ENCODE measurements at regions of chr20 and their contacts with region 1.

Region 1: GRCh38 chr20:62409931-62410745 is 3.1 kb upstream of the CABLES2 start:
- DNase-seq: peak; percentile 73
- H3K4me3 ChIP-seq: peak overlapping the region in 1 of 4 donors; percentile 5
- H3K27ac ChIP-seq: peak overlapping the region; percentile 71 to 92 (median 83)
- H3K4me1 ChIP-seq: peaks cover 39 to 81% (median 74%) of the 10 kb centered on the region in 4 donors
- H3K27me3 ChIP-seq: no peaks in the 10 kb centered on the region
- CTCF ChIP-seq: peak; percentile 23 to 55 (median 42)
- EP300 ChIP-seq: no peak
- POLR2A ChIP-seq: peak; percentile 11

Region 2: DNA sequence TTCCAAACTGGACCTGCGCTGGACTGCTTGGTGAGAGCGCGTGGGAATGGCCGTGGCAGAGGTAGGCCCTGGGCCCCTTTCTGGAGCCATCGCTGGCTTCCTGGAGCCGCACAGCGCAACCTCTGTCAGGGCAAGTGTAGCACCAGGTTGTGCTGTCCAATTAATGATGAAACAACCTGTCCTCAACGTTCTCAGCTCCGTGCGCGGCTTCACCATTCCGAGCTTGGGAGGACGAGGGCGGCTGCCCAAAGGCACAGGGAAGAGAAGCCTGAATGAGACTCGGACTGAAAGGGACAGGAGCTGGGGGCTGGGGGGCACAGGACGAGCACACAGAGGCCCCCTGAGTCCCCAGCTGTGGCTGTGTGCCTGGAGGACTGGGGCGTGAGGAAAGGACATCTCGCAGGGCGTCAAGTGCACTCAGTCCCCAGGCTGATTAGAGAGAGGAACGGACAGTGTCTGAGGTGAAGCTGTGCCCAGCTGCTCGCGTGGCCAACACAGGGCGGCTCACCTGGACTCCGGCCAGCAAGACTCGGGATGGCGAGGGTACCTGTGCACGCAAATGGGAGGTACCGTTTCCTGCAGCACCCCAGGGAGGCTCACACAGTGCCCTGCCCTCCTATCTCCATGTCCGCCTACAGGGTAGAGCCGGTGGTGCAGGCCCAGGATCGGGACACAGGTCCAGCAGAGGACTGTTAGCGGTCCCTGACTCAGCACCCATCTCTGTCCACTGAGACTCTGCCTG is 747.7 kb before region 1 on chr20:
- in situ Hi-C with region 1: no loop called
- intact Hi-C with region 1: loop called (anchors 10 kb)
- DNase-seq: no peak
- H3K4me3 ChIP-seq: no peak overlapping the region
- H3K27ac ChIP-seq: no peak overlapping the region
- H3K4me1 ChIP-seq: no peaks in the 10 kb centered on the region
- H3K27me3 ChIP-seq: no peaks in the 10 kb centered on the region
- CTCF ChIP-seq: no peak
- EP300 ChIP-seq: no peak
- POLR2A ChIP-seq: no peak

Region 3: GRCh38 chr20:62161347-62162071 is 248.6 kb before region 1 on chr20:
- in situ Hi-C with region 1: no loop called
- intact Hi-C with region 1: no loop called
- DNase-seq: no peak
- H3K4me3 ChIP-seq: no peak overlapping the region
- H3K27ac ChIP-seq: no peak overlapping the region
- H3K4me1 ChIP-seq: peaks cover 0 to 7% (median 1%) of the 10 kb centered on the region in 4 donors
- H3K27me3 ChIP-seq: no peaks in the 10 kb centered on the region
- CTCF ChIP-seq: no peak
- EP300 ChIP-seq: no peak
- POLR2A ChIP-seq: no peak

Region 4: GRCh38 chr20:62191781-62192559 is 218.2 kb before region 1 on chr20:
- in situ Hi-C with region 1: no loop called
- intact Hi-C with region 1: no loop called
- DNase-seq: no peak
- H3K4me3 ChIP-seq: no peak overlapping the region
- H3K27ac ChIP-seq: no peak overlapping the region
- H3K4me1 ChIP-seq: peaks cover 0 to 7% (median 3%) of the 10 kb centered on the region in 4 donors
- H3K27me3 ChIP-seq: no peaks in the 10 kb centered on the region
- CTCF ChIP-seq: no peak
- EP300 ChIP-seq: no peak
- POLR2A ChIP-seq: no peak

Region 5: GRCh38 chr20:62368976-62369814 is 40.9 kb before region 1 on chr20:
- in situ Hi-C with region 1: no loop called
- intact Hi-C with region 1: no loop called
- DNase-seq: no peak
- H3K4me3 ChIP-seq: peak overlapping the region in 2 of 4 donors; percentile 58 to 82
- H3K27ac ChIP-seq: peak overlapping the region; percentile 86 to 97 (median 88)
- H3K4me1 ChIP-seq: peaks cover 44 to 73% (median 55%) of the 10 kb centered on the region in 4 donors
- H3K27me3 ChIP-seq: peaks cover 63% of the 10 kb centered on the region
- CTCF ChIP-seq: peak; percentile 17 to 47 (median 40)
- EP300 ChIP-seq: no peak
- POLR2A ChIP-seq: no peak

Region 6: DNA sequence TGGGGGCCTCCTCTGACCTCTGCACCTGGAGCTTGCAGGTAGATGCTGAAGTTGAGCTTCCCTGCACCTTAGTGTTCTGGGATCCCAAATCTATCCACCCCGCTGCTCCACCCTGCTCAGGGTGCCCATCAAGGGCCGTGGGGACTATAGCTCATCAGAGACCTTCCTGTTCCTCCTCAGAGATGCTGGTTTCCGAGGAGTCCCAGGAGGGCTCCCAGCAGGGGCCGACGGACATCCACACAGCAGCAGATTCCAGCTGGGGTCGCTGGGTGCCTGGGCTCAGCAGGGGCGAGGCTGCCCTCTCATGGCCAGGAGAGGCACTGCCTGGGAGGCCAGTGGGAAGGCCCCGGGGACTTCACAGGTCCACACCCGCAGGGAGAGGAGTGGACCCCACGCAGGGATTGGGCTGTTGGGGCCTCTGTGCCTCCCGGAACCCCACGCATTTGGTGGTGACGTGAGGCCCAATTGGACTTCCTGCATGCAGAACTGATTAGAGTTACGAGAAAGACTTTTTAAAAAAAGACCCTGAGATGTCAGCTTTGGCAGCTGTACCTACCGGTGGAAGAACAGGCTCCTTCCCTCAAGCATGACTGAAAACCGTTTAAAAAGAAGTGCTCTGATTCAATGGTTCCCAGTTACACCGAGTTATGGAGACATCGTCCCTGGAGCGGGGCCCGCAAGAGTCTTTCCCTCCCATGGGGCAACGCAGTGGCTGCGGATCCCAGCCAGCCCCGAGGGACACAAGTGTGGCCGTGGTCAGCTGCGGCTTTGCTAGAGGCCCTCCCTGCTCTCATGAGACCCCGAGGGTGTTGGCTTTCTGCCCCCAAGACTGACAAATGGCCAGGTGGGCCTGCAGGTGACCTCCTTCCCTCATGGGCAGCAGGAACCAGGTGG is 206.8 kb after region 1 on chr20:
- in situ Hi-C with region 1: no loop called
- intact Hi-C with region 1: loop called (anchors 10 kb)
- DNase-seq: peak; percentile 80
- H3K4me3 ChIP-seq: no peak overlapping the region
- H3K27ac ChIP-seq: peak overlapping the region in 3 of 4 donors; percentile 34 to 53 (median 35)
- H3K4me1 ChIP-seq: peaks cover 0 to 15% (median 7%) of the 10 kb centered on the region in 4 donors
- H3K27me3 ChIP-seq: no peaks in the 10 kb centered on the region
- CTCF ChIP-seq: peak; percentile 85 to 97 (median 96)
- EP300 ChIP-seq: no peak
- POLR2A ChIP-seq: no peak

Region 7: GRCh38 chr20:62914970-62915457 is 504.9 kb after region 1 on chr20:
- in situ Hi-C with region 1: no loop called
- intact Hi-C with region 1: no loop called
- DNase-seq: no peak
- H3K4me3 ChIP-seq: no peak overlapping the region
- H3K27ac ChIP-seq: peak overlapping the region in 2 of 4 donors; percentile 23 to 30
- H3K4me1 ChIP-seq: peaks cover 35 to 65% (median 53%) of the 10 kb centered on the region in 4 donors
- H3K27me3 ChIP-seq: no peaks in the 10 kb centered on the region
- CTCF ChIP-seq: no peak
- EP300 ChIP-seq: no peak
- POLR2A ChIP-seq: no peak

Measured in transverse colon (tissue), 4 donors.